Activated CD4-positive, alpha-beta T cell treated with anti-CD3 and anti-CD28 coated beads for 36 hours (primary cell): ENCODE measurements at regions of chr3 and their contacts with region 1.

Region 1: GRCh38 chr3:151305101-151305750 is 11.4 kb downstream of the GPR87 start:
- DNase-seq: peak; percentile 51
- ATAC-seq: peak; percentile 80
- H3K4me3 Mint-ChIP-seq: peak overlapping the region; percentile 40
- H3K27ac Mint-ChIP-seq: peak overlapping the region; percentile 69
- H3K4me1 Mint-ChIP-seq: peaks cover 78% of the 10 kb centered on the region
- H3K27me3 Mint-ChIP-seq: peaks cover 14% of the 10 kb centered on the region

Region 2: GRCh38 chr3:150737874-150738713 is 567.1 kb before region 1 on chr3:
- CTCF ChIA-PET with region 1: no interaction called
- POLR2A ChIA-PET with region 1: no interaction called
- intact Hi-C with region 1: loop called (anchors 2 to 10 kb)
- DNase-seq: peak; percentile 77
- ATAC-seq: peak; percentile 73
- H3K4me3 Mint-ChIP-seq: peak overlapping the region; percentile 40
- H3K27ac Mint-ChIP-seq: peak overlapping the region; percentile 93
- H3K4me1 Mint-ChIP-seq: peaks cover 72% of the 10 kb centered on the region
- H3K27me3 Mint-ChIP-seq: no peaks in the 10 kb centered on the region

Region 3: GRCh38 chr3:151268267-151269235 is 36.7 kb before region 1 on chr3:
- CTCF ChIA-PET with region 1: no interaction called
- POLR2A ChIA-PET with region 1: no interaction called
- intact Hi-C with region 1: loop called in 1 of 2 experiments (anchors 1 kb)
- DNase-seq: peak; percentile 56
- ATAC-seq: peak; percentile 86
- H3K4me3 Mint-ChIP-seq: peak overlapping the region; percentile 13
- H3K27ac Mint-ChIP-seq: peak overlapping the region; percentile 53
- H3K4me1 Mint-ChIP-seq: peaks cover 11% of the 10 kb centered on the region
- H3K27me3 Mint-ChIP-seq: no peaks in the 10 kb centered on the region

Region 4: DNA sequence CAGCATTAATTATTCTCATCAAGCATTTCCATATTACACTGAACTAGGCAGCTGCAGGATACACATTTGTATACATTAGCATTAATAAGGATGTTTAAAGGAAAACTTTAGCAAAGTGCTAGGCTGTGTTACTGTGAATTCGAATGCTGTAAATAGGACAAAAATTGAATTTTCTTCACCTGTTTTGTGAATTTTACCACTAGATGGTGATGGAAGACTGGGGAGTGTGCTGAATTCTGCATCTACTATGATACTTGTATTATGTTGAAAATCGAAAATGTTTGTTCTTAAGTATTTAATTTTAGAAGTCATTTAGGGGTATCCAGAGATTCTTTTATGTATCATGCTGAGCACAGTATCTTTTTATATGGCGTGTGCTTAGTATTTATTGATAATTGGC is 14.6 kb before region 1 on chr3:
- CTCF ChIA-PET with region 1: interaction called, 8 read pairs
- POLR2A ChIA-PET with region 1: no interaction called
- intact Hi-C with region 1: loop called in 1 of 2 experiments (anchors 2 kb)
- DNase-seq: no peak
- ATAC-seq: no peak
- H3K4me3 Mint-ChIP-seq: no peak overlapping the region
- H3K27ac Mint-ChIP-seq: no peak overlapping the region
- H3K4me1 Mint-ChIP-seq: peaks cover 4% of the 10 kb centered on the region
- H3K27me3 Mint-ChIP-seq: no peaks in the 10 kb centered on the region

Region 5: DNA sequence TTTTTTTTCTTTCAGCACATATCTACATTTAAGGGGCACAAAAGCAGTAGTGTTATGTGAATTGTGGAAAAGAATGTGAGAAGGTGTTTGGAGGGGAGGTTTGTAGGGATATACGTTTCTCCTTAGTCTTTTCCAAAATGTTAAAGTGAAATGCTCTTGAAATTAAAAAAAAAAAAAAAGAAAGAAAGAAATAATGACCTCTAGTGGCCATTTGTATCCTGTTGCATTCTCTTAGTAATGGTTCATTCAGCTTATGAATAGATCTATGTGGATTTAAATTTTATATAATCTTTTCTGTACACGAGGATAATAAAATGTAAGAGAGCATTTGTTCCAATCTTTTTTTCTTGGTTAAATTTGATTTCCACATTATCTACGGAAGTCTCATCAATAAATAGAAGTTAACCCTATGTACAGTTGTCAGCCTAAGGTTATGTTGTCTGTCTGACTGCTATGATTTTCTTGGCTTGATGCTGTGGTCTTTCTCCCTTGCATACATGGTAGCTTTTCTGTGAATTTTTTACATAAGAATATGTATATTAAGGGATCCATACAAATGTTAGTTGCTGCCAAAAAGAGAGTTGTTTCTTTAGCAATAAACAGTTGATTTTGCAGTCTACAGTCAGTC is 22.5 kb after region 1 on chr3:
- CTCF ChIA-PET with region 1: interaction called, 15 read pairs
- POLR2A ChIA-PET with region 1: interaction called, 4 read pairs
- intact Hi-C with region 1: no loop called
- DNase-seq: no peak
- ATAC-seq: peak; percentile 17
- H3K4me3 Mint-ChIP-seq: no peak overlapping the region
- H3K27ac Mint-ChIP-seq: no peak overlapping the region
- H3K4me1 Mint-ChIP-seq: peaks cover 25% of the 10 kb centered on the region
- H3K27me3 Mint-ChIP-seq: peaks cover 10% of the 10 kb centered on the region

Region 6: DNA sequence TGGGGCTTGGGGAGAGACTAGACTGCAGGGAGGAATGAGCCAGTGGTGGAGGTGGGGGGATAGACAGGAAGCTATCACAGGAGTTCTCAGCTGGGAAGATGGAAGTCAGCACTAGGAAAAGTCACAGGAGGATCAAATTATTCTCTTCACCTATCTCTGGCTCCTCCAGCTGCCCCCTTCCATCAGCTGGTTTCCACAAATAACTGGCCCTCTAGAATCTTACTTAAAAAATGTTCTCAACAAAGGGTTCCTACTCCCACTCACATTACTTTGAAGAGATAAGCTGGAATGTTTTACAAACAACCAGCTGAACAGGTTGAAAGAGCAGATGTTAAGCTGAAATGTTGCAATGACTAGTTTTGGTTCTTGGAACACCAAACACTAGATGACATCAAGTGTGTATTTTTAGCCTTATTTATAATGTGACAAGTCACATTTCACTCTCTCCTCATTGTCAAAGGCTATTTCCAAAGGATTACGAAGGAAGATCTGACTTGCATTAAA is 325.8 kb after region 1 on chr3:
- CTCF ChIA-PET with region 1: no interaction called
- POLR2A ChIA-PET with region 1: no interaction called
- intact Hi-C with region 1: no loop called
- DNase-seq: no peak
- ATAC-seq: no peak
- H3K4me3 Mint-ChIP-seq: no peak overlapping the region
- H3K27ac Mint-ChIP-seq: no peak overlapping the region
- H3K4me1 Mint-ChIP-seq: no peaks in the 10 kb centered on the region
- H3K27me3 Mint-ChIP-seq: peaks cover 2% of the 10 kb centered on the region